Esophagus squamous epithelium (tissue), 5 donors: ENCODE measurements at regions of chr13 and their contacts with region 1.

Region 1: DNA sequence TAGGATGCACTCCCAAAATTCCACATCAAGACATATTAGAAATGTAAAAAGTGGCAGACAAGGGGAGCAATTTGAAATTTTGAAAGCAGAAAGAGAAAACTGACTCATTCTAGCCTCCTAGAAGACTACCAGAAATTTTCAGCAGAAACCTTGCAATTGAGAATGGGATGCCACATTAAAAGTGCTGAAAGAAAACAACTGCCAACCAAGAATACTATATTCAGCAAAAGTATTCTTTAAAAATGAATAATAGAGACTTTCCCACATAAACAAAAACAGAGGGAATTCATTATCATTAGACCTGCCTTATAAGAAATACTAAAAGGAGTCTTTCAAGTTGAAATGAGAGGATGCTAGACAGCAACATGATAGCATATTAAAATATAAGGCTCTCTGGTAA is 78.3 kb upstream of the HTR2A start:
- DNase-seq: no peak
- H3K4me3 ChIP-seq: no peak overlapping the region
- H3K27ac ChIP-seq: no peak overlapping the region
- H3K4me1 ChIP-seq: no peaks in the 10 kb centered on the region
- H3K27me3 ChIP-seq: no peaks in the 10 kb centered on the region
- CTCF ChIP-seq: no peak
- POLR2A ChIP-seq: no peak

Region 2: GRCh38 chr13:46893798-46894560 is 81.2 kb before region 1 on chr13:
- intact Hi-C with region 1: no loop called
- DNase-seq: no peak
- H3K4me3 ChIP-seq: peak overlapping the region; percentile 28 to 73 (median 54)
- H3K27ac ChIP-seq: peak overlapping the region in 3 of 4 donors; percentile 53 to 79 (median 79)
- H3K4me1 ChIP-seq: peaks cover 0 to 24% (median 5%) of the 10 kb centered on the region in 3 donors
- H3K27me3 ChIP-seq: peaks cover 0 to 32% (median 0%) of the 10 kb centered on the region in 4 donors
- CTCF ChIP-seq: peak; percentile 71 to 96 (median 78)
- POLR2A ChIP-seq: no peak

Region 3: GRCh38 chr13:47774671-47774994 is 799.5 kb after region 1 on chr13:
- intact Hi-C with region 1: loop called (anchors 10 kb)
- DNase-seq: no peak
- H3K4me3 ChIP-seq: no peak overlapping the region
- H3K27ac ChIP-seq: no peak overlapping the region
- H3K4me1 ChIP-seq: no peaks in the 10 kb centered on the region
- H3K27me3 ChIP-seq: peaks cover 0 to 6% (median 0%) of the 10 kb centered on the region in 4 donors
- CTCF ChIP-seq: no peak
- POLR2A ChIP-seq: no peak